Activated B cell treated with CpG ODN at 0.5 μM for 24 hours (primary cell): ENCODE measurements at regions of chr22 and their contacts with region 1.

Region 1: DNA sequence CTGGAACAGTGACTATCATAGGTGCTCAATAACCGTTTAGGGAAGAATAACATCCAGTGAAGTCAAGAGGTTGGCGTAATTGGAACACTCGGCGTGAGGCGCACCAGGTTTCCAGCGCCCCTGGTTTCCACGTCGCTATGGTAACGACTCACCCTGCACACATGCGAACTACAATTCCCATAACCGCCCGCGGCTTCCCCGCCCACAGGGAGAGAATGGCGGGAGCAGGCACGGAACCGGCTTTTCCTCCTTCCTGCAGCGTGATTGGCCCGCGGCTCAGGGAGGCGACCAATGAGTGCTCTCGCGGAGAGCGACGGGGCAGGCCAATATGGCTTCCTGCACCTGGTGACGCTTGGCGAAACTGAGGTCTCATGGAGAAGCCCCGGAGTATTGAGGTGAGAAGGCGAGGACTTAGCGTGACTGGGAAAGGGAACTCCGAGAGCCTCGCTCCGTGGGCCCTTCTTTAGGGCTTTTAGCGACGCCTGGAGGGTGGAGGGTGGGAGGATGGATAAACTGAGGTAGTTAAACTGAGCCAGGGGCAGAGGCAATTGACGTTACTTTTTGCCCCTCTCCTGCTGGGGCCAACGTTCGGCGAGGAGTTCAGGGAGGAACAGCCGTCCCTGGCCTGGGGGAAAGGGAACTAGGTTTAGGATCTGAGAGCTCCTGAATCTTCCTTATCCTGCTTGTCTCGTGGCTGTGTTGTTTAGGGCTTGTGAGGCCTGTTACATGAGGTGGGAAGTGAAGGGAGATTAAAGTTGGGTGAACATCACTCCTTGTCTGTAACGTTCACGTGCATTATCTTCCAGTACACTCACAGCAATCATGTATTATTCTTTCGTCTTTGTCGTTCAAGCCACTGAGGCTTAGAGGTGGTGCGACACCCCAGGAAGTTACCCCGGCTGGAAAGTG is at the start of gene L3MBTL2:
- DNase-seq: peak; percentile 96
- ATAC-seq: peak; percentile 100
- H3K4me3 Mint-ChIP-seq: peak within 1 kb of the TSS; percentile 90
- H3K27ac Mint-ChIP-seq: peak within 1 kb of the TSS; percentile 86
- H3K4me1 Mint-ChIP-seq: peaks cover 30% of the 10 kb centered on the region
- H3K27me3 Mint-ChIP-seq: peaks cover 9% of the 10 kb centered on the region
- CTCF ChIP-seq: no peak
- total RNA-seq, gene L3MBTL2: 39.9 and 42.3 TPM in 2 replicates

Region 2: DNA sequence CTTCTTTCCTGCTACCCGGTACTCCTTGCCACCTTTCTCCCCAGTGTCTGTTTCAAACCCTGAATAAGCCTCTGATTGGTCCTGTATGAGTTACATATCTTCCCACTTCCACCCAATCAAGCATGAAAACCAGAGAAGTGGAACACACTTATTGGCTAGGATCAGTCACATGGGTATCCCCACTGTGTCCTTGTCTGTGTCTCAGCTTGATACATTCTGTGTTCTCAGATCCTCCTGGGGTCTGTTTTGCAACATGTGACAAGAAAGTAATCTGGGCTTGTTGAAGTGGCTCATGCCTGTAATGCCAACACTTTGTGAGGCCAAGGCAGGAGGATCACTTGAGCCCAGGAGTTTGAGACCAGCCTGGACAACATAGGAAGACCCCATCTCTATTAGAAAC is 502.1 kb before region 1 on chr22:
- CTCF ChIA-PET with region 1: no interaction called
- POLR2A ChIA-PET with region 1: no interaction called
- intact Hi-C with region 1: no loop called
- DNase-seq: no peak
- ATAC-seq: no peak
- H3K4me3 Mint-ChIP-seq: no peak overlapping the region
- H3K27ac Mint-ChIP-seq: no peak overlapping the region
- H3K4me1 Mint-ChIP-seq: no peaks in the 10 kb centered on the region
- H3K27me3 Mint-ChIP-seq: peaks cover 3% of the 10 kb centered on the region
- CTCF ChIP-seq: no peak

Region 3: DNA sequence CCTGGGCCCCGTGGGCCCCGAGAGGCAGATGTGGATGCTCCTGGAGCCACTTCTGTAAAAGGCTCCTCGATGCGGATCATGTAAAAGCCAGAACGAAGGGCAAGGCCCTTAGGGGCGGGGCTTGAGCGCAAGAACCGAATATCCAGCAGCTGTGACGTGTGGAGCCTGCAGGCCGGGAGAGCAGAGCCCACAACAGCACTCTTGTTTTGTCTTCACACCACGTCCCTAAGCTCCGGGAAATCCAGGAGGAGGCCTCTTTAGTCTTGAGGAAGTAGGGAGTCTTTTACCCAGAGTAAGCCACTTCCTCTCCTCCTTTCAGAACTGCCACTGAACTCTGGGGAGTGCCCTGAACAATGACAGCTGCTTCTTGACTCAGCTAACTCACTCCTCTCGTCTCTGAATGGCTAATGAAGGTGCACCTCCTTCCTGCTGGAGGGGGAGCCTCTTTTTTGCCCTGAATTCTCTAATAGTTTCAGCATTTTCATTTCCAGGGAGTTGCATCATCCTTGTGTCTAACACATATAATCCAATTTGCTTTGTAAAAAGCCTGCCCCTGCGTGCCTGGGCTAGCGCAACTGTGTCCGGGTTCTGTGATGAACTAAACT is 12.4 kb after region 1 on chr22:
- CTCF ChIA-PET with region 1: no interaction called
- POLR2A ChIA-PET with region 1: interaction called, 10 read pairs
- intact Hi-C with region 1: loop called (anchors 1 kb)
- DNase-seq: peak; percentile 29
- ATAC-seq: peak; percentile 88
- H3K4me3 Mint-ChIP-seq: peak overlapping the region; percentile 68
- H3K27ac Mint-ChIP-seq: peak overlapping the region; percentile 69
- H3K4me1 Mint-ChIP-seq: peaks cover 12% of the 10 kb centered on the region
- H3K27me3 Mint-ChIP-seq: no peaks in the 10 kb centered on the region
- CTCF ChIP-seq: no peak

Region 4: GRCh38 chr22:41237707-41238569 is 32.7 kb after region 1 on chr22:
- CTCF ChIA-PET with region 1: interaction called, 5 read pairs
- POLR2A ChIA-PET with region 1: interaction called, 4 read pairs
- intact Hi-C with region 1: loop called (anchors 1 kb)
- DNase-seq: peak; percentile 78
- ATAC-seq: peak; percentile 97
- H3K4me3 Mint-ChIP-seq: peak overlapping the region; percentile 64
- H3K27ac Mint-ChIP-seq: no peak overlapping the region
- H3K4me1 Mint-ChIP-seq: peaks cover 8% of the 10 kb centered on the region
- H3K27me3 Mint-ChIP-seq: no peaks in the 10 kb centered on the region
- CTCF ChIP-seq: no peak

Region 5: GRCh38 chr22:41301105-41302020 is 96.1 kb after region 1 on chr22 and contains the start of gene ZC3H7B:
- CTCF ChIA-PET with region 1: no interaction called
- POLR2A ChIA-PET with region 1: no interaction called
- intact Hi-C with region 1: loop called (anchors 2 kb)
- DNase-seq: peak; percentile 74
- ATAC-seq: peak; percentile 93
- H3K4me3 Mint-ChIP-seq: peak within 1 kb of the TSS; percentile 83
- H3K27ac Mint-ChIP-seq: peak within 1 kb of the TSS; percentile 92
- H3K4me1 Mint-ChIP-seq: peaks cover 30% of the 10 kb centered on the region
- H3K27me3 Mint-ChIP-seq: no peaks in the 10 kb centered on the region
- CTCF ChIP-seq: no peak
- total RNA-seq, gene ZC3H7B: 54.0 and 58.2 TPM in 2 replicates